Breast epithelium (tissue), 4 donors: ENCODE measurements at regions of chr12 and their contacts with region 1.

Region 1: DNA sequence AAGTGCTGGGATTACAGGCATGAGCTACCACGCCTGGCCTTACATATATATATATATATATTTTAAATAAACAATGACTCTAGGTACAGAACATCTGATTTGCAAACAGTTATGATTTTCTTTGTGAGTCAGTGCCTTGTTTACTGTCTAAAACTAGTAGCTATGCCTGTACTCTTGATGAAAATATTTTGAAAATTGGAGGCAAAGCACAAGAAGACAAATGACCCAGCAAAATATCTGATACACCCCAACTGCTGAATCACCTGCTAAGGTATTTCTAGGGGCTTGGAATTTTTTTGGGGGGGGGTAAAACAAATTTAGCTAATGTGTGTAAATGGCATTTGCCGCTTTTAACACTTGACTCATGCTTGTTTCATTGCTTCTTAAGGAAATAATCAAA is 69.3 kb downstream of the SYT10 start:
- DNase-seq: no peak
- H3K4me3 ChIP-seq: no peak overlapping the region
- H3K27ac ChIP-seq: no peak overlapping the region
- H3K4me1 ChIP-seq: no peaks in the 10 kb centered on the region
- H3K27me3 ChIP-seq: no peaks in the 10 kb centered on the region
- CTCF ChIP-seq: no peak
- POLR2A ChIP-seq: no peak

Region 2: DNA sequence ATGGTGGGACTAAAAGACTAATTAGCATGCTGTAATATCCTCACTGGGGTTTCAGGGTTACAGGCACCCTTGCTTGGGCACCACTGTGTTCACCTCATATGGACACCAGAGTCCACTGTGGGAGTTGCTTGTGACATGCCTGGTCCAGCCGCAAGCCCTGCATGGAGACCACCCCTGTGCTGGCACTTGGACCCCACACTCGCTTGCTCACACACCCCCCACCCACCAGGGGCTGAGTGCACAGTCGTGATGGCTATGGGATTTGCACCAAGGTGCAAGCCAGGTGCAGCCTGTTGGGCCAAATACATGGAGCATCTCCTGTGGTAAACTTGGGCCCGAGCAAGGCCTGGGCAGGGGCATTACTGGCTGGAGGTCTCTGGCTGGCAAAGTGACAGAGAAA is 59.8 kb before region 1 on chr12:
- intact Hi-C with region 1: loop called (anchors 2 kb)
- DNase-seq: no peak
- H3K4me3 ChIP-seq: no peak overlapping the region
- H3K27ac ChIP-seq: no peak overlapping the region
- H3K4me1 ChIP-seq: no peaks in the 10 kb centered on the region
- H3K27me3 ChIP-seq: no peaks in the 10 kb centered on the region
- CTCF ChIP-seq: no peak
- POLR2A ChIP-seq: no peak

Region 3: DNA sequence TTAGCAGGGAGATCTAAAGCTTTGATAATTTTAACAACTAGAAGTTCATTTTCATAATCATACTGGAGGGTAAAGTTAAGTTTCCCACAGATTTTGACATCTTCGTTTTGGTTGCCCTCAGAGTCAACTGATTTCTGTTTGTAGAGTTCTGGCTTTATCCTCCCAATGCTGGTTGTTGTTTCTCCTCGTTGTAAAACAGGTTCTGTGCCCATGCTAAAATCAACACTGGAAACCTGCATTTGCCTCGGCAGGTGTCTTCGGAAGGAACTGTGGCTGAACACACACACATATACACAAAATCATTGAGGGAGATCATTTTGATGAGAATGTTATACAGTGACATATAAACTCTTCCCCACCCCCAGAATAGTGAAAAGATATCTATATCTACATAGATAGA is 36.8 kb after region 1 on chr12:
- intact Hi-C with region 1: no loop called
- DNase-seq: no peak
- H3K4me3 ChIP-seq: no peak overlapping the region
- H3K27ac ChIP-seq: no peak overlapping the region
- H3K4me1 ChIP-seq: no peaks in the 10 kb centered on the region
- H3K27me3 ChIP-seq: no peaks in the 10 kb centered on the region
- CTCF ChIP-seq: no peak
- POLR2A ChIP-seq: no peak

Region 4: DNA sequence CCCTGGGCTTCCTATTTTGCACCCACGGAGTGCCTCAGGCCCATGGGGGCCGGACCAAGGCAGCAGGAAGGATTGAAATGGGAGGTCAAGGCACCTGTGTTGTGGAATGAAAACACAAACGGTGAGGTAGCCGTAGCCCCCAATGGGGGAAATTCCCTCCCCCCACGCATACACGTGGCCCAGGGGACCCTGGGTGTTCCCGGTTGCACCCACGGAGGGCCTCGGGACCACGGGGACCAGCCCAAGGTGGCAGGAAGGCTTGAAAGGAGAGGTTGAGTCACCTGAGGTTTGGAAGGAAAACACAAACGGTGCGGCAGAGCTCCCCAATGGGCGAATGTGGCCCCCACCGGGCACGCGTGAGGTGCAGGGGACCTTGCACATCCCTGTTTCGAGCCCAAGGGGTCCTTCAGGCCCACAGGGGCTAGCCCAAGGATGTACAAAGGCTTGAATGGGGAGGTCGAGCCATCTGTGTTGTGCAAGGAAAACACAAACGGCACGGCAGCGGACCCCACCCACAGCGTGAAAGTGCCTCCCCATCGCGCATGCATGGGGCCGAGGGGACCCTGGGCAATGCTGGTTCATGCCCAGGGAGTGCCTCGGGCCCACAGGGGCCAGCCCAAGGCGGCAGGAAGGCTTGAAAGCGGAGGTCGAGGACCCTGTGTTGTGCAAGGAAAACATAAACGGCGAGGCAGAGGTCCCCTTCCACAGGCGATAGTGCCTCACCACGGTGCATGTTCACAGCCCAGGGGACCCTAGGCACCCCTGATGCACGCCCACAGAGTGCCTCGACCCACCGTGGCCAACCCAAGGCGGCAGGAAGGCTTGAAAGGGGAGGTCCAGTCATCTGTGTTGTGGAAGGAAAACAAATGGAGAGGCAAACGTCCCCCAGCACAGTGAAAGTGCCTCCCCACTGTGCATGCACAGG is 1028.7 kb after region 1 on chr12:
- intact Hi-C with region 1: loop called (anchors 5 kb)
- DNase-seq: peak; percentile 10 to 27
- H3K4me3 ChIP-seq: no peak overlapping the region
- H3K27ac ChIP-seq: no peak overlapping the region
- H3K4me1 ChIP-seq: no peaks in the 10 kb centered on the region
- H3K27me3 ChIP-seq: no peaks in the 10 kb centered on the region
- CTCF ChIP-seq: no peak
- POLR2A ChIP-seq: no peak